Breast epithelium (tissue), 4 donors: ENCODE measurements at regions of chr2 and their contacts with region 1.

Region 1: GRCh38 chr2:130873700-130874346 is 37.1 kb downstream of the ARHGEF4 start:
- DNase-seq: peak in 1 of 2 donors; percentile 31
- H3K4me3 ChIP-seq: no peak overlapping the region
- H3K27ac ChIP-seq: no peak overlapping the region
- H3K4me1 ChIP-seq: no peaks in the 10 kb centered on the region
- H3K27me3 ChIP-seq: no peaks in the 10 kb centered on the region
- CTCF ChIP-seq: peak in 2 of 3 donors; percentile 39
- POLR2A ChIP-seq: no peak

Region 2: DNA sequence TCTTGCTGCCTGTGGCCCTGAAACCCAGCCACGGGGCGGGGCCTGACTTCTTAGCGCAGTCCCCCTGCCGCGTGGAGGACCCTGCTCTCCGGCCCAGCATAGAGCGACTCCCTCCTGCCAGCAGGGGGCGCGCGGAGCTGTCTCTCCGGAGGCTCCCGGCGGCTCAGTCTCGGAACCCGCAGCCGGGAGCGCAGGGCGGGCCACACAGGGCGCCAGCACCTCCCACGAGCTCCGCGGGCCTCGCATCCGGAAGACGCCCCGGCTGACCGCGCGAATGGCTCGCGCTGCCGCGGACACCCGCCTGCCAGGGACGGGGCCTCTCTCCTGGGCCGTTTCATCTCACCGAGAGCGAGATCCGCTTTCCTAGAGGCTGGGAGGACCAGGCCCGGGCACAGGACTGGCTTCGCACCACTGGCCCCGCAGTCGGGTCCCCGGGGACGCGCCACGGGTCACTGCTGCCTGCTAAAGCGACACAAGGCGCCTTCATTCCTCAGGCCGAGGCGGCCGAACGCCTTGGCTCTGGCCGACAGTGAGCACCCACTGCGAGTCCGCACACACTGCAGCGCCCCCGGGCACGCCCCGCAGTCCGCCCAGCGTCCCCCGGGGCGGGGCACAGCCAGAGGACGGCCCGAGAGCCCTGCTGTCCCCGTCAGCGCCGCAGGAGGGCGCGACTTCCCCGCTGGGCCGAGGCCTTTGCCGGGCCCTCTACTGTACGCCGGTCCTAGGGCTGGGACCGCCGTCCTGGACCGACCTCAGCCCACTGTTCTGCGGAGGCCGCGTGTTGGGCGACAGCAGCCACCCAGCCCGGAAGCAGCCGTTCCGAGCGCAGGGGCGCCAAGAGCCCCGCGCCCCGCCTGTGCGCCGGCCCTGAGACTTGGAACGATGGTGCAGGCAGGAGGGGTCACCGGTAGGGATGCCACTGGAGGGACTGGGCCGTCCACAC is 76.1 kb before region 1 on chr2:
- intact Hi-C with region 1: loop called (anchors 10 kb)
- DNase-seq: peak; percentile 64 to 85
- H3K4me3 ChIP-seq: peak overlapping the region; percentile 64 to 90 (median 76)
- H3K27ac ChIP-seq: peak overlapping the region; percentile 80 to 96
- H3K4me1 ChIP-seq: no peaks in the 10 kb centered on the region
- H3K27me3 ChIP-seq: peaks cover 0 to 2% of the 10 kb centered on the region in 2 donors
- CTCF ChIP-seq: peak; percentile 44 to 83 (median 69)
- POLR2A ChIP-seq: no peak

Region 3: GRCh38 chr2:130846686-130847375 is 27.0 kb before region 1 on chr2:
- intact Hi-C with region 1: no loop called
- DNase-seq: no peak
- H3K4me3 ChIP-seq: no peak overlapping the region
- H3K27ac ChIP-seq: no peak overlapping the region
- H3K4me1 ChIP-seq: no peaks in the 10 kb centered on the region
- H3K27me3 ChIP-seq: peaks cover 0 to 8% of the 10 kb centered on the region in 2 donors
- CTCF ChIP-seq: no peak
- POLR2A ChIP-seq: no peak